RWPE1 (cell line): ENCODE measurements at regions of chr3 and their contacts with region 1.

Region 1: GRCh38 chr3:86774082-86774691 is 216.8 kb downstream of the VGLL3 start:
- DNase-seq: peak; percentile 4
- H3K27ac ChIP-seq: no peak overlapping the region
- CTCF ChIP-seq: peak; percentile 55

Region 2: DNA sequence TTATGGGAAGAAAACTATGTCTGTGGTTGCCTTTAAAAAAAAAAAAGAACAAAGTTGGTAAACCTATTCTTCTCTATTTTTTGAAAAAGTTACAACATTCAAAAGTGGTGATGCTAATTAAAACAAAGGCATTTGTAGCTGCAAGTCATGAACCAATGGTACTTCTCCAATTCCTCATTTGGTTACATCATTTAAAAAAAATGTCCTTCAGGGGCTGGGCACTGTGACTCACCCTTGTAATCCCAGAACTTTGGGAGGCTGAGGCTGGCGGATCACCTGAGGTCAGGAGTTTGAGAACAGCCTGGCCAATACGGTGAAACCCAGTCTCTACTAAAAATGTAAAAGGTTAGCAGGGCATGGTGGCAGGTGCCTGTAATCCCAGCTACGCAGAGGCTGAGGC is 357.9 kb before region 1 on chr3:
- CTCF ChIA-PET with region 1: no interaction called
- POLR2A ChIA-PET with region 1: no interaction called
- DNase-seq: peak; percentile 13
- H3K27ac ChIP-seq: no peak overlapping the region
- CTCF ChIP-seq: no peak

Region 3: DNA sequence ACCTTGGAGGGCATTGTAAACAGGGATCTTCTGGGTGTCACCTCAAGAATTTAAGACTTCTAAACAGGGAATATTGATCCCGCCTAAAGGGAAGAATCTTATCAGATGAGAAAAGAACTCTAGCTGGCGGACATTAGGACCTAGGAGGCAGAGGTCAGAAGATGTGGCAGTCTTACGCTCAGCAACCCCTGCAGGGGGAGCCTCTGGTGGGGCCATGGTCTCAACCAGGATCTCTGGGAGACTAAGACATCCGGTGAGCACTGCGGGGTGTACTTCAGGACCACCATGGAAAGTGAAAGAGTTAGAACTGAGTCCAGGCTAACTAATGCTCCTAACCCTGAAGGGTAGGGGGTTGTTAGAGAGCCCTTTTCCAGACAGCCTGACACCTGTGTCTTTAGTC is 78.4 kb before region 1 on chr3:
- CTCF ChIA-PET with region 1: no interaction called
- POLR2A ChIA-PET with region 1: no interaction called
- DNase-seq: no peak
- H3K27ac ChIP-seq: no peak overlapping the region
- CTCF ChIP-seq: no peak

Region 4: GRCh38 chr3:87082796-87083440 is 308.7 kb after region 1 on chr3:
- CTCF ChIA-PET with region 1: interaction called, 21 read pairs
- POLR2A ChIA-PET with region 1: no interaction called
- DNase-seq: peak; percentile 28
- H3K27ac ChIP-seq: no peak overlapping the region
- CTCF ChIP-seq: peak; percentile 41